ENCODE measurements at regions of chr1 and their contacts with region 1.

Region 1: GRCh38 chr1:64686828-64687724 is 57.8 kb upstream of the RAVER2 start:
- DNase-seq: peak; percentile 32
- H3K4me3 ChIP-seq: no peak overlapping the region
- H3K27ac ChIP-seq: no peak overlapping the region
- H3K4me1 ChIP-seq: peaks cover 8% of the 10 kb centered on the region
- H3K27me3 ChIP-seq: no peaks in the 10 kb centered on the region
- CTCF ChIP-seq: peak; percentile 87

Region 2: GRCh38 chr1:64396817-64397216 is 290.3 kb before region 1 on chr1:
- intact Hi-C with region 1: no loop called
- DNase-seq: no peak
- H3K4me3 ChIP-seq: no peak overlapping the region
- H3K27ac ChIP-seq: no peak overlapping the region
- H3K4me1 ChIP-seq: no peaks in the 10 kb centered on the region
- H3K27me3 ChIP-seq: no peaks in the 10 kb centered on the region
- CTCF ChIP-seq: no peak

Region 3: DNA sequence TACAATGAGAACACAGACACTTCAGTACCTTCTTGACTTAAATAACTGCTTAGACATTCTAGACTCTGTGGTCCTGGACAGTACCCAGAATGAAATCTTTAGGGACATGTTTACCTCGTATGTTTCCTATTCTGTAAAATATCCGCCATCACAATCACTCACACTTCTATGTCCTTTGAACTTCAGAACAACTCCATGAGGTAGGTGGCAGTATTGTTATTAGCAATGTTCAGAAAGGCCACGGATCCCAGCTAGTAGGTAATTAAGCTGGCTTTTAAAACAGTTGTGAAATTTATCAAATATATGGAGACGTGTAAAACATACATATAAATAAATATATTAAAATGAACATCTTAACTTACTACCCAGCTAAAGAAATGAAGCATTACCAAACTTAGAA is 133.8 kb before region 1 on chr1:
- intact Hi-C with region 1: no loop called
- DNase-seq: no peak
- H3K4me3 ChIP-seq: no peak overlapping the region
- H3K27ac ChIP-seq: no peak overlapping the region
- H3K4me1 ChIP-seq: no peaks in the 10 kb centered on the region
- H3K27me3 ChIP-seq: no peaks in the 10 kb centered on the region
- CTCF ChIP-seq: no peak

Region 4: DNA sequence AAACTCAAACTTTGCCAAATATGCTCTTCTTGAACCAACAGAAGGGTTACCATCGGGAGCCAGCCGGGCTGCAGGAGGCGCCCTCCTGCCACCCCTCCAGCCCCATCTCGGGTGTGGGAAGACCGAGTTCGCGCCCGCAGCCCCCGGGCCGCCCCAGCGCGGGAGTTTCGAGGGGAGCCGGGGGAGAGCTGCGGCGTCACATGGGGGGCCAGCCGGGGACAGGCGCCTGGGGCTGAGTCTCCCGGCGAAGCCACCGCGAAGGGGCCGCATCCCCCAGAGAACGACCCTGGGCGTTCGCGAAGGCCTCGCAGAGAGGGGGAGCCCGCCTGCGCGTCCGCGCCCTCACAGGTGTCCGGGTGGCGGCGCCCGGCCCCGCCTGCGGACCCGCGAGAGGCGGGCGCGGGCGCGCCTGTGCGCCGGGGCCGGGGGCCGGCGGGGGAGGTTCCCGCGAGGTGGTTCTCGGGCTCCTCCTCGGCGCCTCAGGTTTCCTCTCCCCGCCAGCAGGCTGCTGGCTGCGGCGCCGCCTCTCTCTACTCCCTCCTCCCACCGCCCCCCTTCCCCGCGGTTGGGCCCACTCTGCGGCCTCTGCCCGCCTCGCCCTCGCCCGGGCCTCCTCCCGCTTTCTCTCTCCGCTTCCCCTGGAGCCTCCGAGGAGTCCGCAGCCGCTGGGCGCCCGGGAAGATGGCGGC is 57.6 kb after region 1 on chr1 and contains the start of gene RAVER2:
- intact Hi-C with region 1: loop called (anchors 5 kb)
- DNase-seq: peak; percentile 79
- H3K4me3 ChIP-seq: peak within 1 kb of the TSS; percentile 88
- H3K27ac ChIP-seq: peak within 1 kb of the TSS; percentile 89
- H3K4me1 ChIP-seq: no peaks in the 10 kb centered on the region
- H3K27me3 ChIP-seq: no peaks in the 10 kb centered on the region
- CTCF ChIP-seq: peak; percentile 30
- total RNA-seq, gene RAVER2: 43.0 to 58.6 TPM

Region 5: GRCh38 chr1:65104854-65105534 is 417.9 kb after region 1 on chr1:
- intact Hi-C with region 1: no loop called
- DNase-seq: no peak
- H3K4me3 ChIP-seq: no peak overlapping the region
- H3K27ac ChIP-seq: no peak overlapping the region
- H3K4me1 ChIP-seq: no peaks in the 10 kb centered on the region
- H3K27me3 ChIP-seq: no peaks in the 10 kb centered on the region
- CTCF ChIP-seq: no peak

Measured in colonic mucosa (tissue), 4 donors.